ENCODE measurements at regions of chr18 and their contacts with region 1.

Region 1: GRCh38 chr18:44733069-44733753 is 52.5 kb downstream of the SETBP1 start:
- DNase-seq: peak in 1 of 2 experiments; percentile 4
- H3K4me3 ChIP-seq: no peak overlapping the region
- H3K4me3 Mint-ChIP-seq: no peak overlapping the region
- H3K27ac Mint-ChIP-seq: peak overlapping the region; percentile 35
- H3K4me1 ChIP-seq: peaks cover 51% of the 10 kb centered on the region
- H3K4me1 Mint-ChIP-seq: peaks cover 51% of the 10 kb centered on the region
- H3K27me3 ChIP-seq: no peaks in the 10 kb centered on the region
- H3K27me3 Mint-ChIP-seq: no peaks in the 10 kb centered on the region
- CTCF ChIP-seq: no peak

Region 2: DNA sequence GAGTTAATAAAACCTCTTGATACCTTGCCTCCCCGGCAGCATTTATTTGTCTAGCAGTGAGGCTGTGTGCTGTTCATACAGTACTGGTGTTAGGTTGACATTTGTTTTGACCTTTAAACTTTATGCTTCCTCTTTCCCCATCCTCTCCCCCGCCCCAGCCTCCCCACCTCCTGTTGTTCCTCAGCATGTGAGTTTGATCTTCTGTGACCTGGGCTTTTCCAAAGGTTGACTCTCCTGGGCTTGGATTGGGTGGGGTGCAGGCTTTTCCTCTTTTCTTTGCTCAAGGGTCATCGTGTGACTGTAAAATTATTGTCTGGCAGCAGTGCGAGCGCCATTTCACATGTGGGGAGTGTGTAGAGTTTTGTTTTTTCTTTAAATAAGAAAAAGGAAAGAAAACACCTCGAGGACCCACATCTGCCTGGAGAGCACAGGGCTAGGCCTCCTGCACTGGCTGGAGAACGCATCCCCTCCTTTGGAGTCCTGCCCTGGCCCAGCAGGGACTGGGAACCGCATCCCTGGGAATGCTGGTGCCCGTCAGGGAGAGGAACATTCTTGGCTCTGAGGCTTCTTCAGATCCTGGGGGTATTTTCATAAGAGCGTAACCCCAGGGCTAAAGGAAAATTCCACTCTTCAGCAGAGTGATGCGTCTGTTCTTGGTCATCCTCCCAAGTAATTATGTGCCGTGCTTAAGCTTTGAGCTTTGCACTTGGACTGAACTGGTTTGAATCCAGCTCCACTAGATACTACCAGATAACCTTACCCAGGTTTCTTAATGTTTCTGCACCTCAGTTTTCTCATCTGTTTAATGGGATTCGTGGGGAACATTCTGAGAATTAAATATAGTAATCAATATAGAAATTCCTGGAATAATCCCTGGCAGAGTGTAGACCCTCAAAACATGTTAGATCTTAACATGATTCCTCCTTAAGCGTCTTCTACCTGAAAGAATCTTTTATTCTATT is 39.0 kb after region 1 on chr18:
- CTCF ChIA-PET with region 1: no interaction called
- POLR2A ChIA-PET with region 1: no interaction called
- intact Hi-C with region 1: loop called (anchors 5 kb)
- DNase-seq: peak; percentile 29 to 53
- H3K4me3 ChIP-seq: no peak overlapping the region
- H3K4me3 Mint-ChIP-seq: peak overlapping the region; percentile 22
- H3K27ac Mint-ChIP-seq: no peak overlapping the region
- H3K4me1 ChIP-seq: peaks cover 18% of the 10 kb centered on the region; the same call in 1 of the 2 replicates
- H3K4me1 Mint-ChIP-seq: no peaks in the 10 kb centered on the region
- H3K27me3 ChIP-seq: no peaks in the 10 kb centered on the region
- H3K27me3 Mint-ChIP-seq: no peaks in the 10 kb centered on the region
- CTCF ChIP-seq: no peak

Measured in Caco-2 (cell line).